Aorta (tissue), 5 donors: ENCODE measurements at regions of chr5 and their contacts with region 1.

Region 1: DNA sequence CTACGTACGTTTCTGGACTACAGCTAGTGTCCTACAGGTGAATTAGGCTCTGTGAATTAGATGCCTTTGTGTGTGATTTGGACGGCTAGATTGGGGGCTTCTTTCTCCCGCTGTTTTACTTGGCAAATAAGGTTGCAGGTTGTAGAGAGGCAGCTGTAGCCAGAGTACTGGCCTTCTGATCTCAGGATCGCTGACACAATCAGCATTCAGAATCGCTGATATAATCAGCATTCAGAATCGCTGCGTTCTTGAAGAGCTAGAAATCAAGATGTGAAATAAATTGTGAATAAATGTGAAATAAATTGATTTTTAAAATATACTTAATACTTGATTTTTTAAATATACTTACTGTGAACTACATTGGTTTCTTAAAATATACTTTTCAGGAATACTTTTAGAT is 178.8 kb upstream of the SEMA6A start:
- DNase-seq: no peak
- ATAC-seq: no peak
- H3K4me3 ChIP-seq: no peak overlapping the region
- H3K27ac ChIP-seq: no peak overlapping the region
- H3K4me1 ChIP-seq: no peaks in the 10 kb centered on the region
- H3K27me3 ChIP-seq: no peaks in the 10 kb centered on the region

Region 2: DNA sequence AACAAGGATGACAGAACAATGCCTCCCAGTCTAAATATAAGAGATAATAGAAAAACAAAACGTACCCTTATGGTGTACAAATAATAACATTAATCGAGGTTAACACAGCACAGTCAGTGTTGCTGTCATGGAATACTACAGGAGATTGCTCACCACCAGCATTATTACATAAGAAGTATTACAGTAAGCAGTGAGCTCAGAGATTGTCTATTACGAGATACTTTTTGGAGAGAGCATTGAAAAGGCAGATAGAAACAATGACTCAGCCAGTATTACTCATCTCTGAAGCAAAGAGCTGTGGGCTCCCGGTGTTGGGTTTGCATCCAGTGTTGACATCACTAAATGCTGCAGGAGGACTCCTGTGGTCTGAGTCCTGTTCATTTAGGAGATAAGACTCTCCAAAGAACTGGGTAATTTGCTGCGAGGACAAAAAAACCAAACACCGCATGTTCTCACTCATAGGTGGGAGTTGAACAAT is 13.1 kb after region 1 on chr5:
- intact Hi-C with region 1: loop called in 1 of 2 experiments (anchors 1 kb)
- DNase-seq: no peak
- ATAC-seq: peak; percentile 84
- H3K4me3 ChIP-seq: no peak overlapping the region
- H3K27ac ChIP-seq: no peak overlapping the region
- H3K4me1 ChIP-seq: no peaks in the 10 kb centered on the region
- H3K27me3 ChIP-seq: no peaks in the 10 kb centered on the region